ENCODE measurements at regions of chr13 and their contacts with region 1.

Region 1: DNA sequence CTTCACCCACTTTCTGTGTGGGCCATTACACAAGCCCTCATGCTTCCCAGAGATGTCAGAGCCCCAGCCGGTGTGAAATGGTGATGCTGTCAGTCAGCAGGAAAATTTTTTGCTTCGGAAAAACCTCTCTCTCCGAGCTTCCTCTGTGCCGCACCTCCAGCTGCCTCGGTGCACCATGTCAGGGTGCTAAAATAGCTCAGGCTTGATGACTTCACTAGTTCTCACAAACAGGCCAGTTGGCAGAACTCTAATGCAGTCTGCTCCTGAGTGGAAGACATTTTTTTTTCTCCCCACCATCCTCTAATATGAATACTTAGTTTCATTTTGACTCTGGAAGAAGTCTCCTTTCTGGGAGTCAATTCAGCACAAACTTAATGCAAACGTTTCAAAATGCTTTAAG is 71.3 kb downstream of the KLF12 start:
- DNase-seq: peak; percentile 75
- H3K4me3 Mint-ChIP-seq: peak overlapping the region; percentile 72
- H3K27ac Mint-ChIP-seq: peak overlapping the region; percentile 94
- H3K4me1 Mint-ChIP-seq: peaks cover 84% of the 10 kb centered on the region
- H3K27me3 Mint-ChIP-seq: no peaks in the 10 kb centered on the region

Region 2: DNA sequence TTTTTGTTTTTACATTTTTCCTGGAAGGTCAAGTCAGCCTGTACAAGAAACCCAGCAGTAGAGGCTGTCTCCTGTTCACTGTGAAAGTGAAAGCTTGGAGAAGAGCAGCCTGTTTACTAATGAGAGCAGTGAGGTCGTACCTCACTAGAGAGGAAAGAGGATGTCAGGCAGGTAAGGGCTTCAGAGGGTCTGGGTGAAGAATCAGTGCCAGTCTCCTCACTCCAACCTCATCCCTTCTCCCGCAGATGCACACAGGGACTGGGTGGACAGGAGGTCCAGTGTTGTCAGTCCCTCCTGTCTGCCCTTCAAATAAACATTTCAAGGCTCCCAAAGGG is 541.7 kb before region 1 on chr13:
- CTCF ChIA-PET with region 1: no interaction called
- POLR2A ChIA-PET with region 1: no interaction called
- intact Hi-C with region 1: no loop called
- DNase-seq: no peak
- H3K4me3 Mint-ChIP-seq: peak overlapping the region; percentile 60
- H3K27ac Mint-ChIP-seq: peak overlapping the region; percentile 61
- H3K4me1 Mint-ChIP-seq: peaks cover 16% of the 10 kb centered on the region
- H3K27me3 Mint-ChIP-seq: no peaks in the 10 kb centered on the region

Region 3: GRCh38 chr13:73715114-73715910 is 347.6 kb before region 1 on chr13:
- CTCF ChIA-PET with region 1: no interaction called
- POLR2A ChIA-PET with region 1: no interaction called
- intact Hi-C with region 1: loop called (anchors 5 kb)
- DNase-seq: peak; percentile 77
- H3K4me3 Mint-ChIP-seq: peak overlapping the region; percentile 33
- H3K27ac Mint-ChIP-seq: peak overlapping the region; percentile 75
- H3K4me1 Mint-ChIP-seq: peaks cover 54% of the 10 kb centered on the region
- H3K27me3 Mint-ChIP-seq: no peaks in the 10 kb centered on the region

Region 4: DNA sequence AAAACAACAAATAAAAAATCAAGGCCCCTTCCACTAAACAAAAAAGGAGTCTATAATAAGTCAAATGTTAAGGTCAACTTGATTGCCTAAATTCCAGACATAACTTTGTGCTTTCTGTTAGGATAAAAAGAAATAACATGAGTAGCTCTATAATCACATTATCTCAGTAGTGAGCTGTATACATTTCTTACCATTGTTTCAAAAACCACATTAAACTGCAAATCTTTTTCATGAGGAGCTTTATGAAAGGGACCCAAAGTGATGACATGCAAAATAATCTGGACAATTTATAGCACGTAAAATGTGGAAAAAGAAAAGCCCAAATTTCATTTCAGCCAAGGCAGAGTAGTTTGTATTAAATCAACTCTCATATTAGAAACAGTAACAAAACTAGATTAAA is 197.9 kb before region 1 on chr13:
- CTCF ChIA-PET with region 1: no interaction called
- POLR2A ChIA-PET with region 1: no interaction called
- intact Hi-C with region 1: loop called (anchors 5 kb)
- DNase-seq: no peak
- H3K4me3 Mint-ChIP-seq: no peak overlapping the region
- H3K27ac Mint-ChIP-seq: no peak overlapping the region
- H3K4me1 Mint-ChIP-seq: peaks cover 54% of the 10 kb centered on the region
- H3K27me3 Mint-ChIP-seq: no peaks in the 10 kb centered on the region

Region 5: GRCh38 chr13:73984949-73985691 is 77.8 kb before region 1 on chr13:
- CTCF ChIA-PET with region 1: no interaction called
- POLR2A ChIA-PET with region 1: interaction called, 4 read pairs
- intact Hi-C with region 1: loop called (anchors 1 kb)
- DNase-seq: peak; percentile 89
- H3K4me3 Mint-ChIP-seq: peak overlapping the region; percentile 63
- H3K27ac Mint-ChIP-seq: peak overlapping the region; percentile 90
- H3K4me1 Mint-ChIP-seq: peaks cover 46% of the 10 kb centered on the region
- H3K27me3 Mint-ChIP-seq: no peaks in the 10 kb centered on the region

Region 6: GRCh38 chr13:74005320-74006157 is 57.4 kb before region 1 on chr13:
- CTCF ChIA-PET with region 1: no interaction called
- POLR2A ChIA-PET with region 1: no interaction called
- intact Hi-C with region 1: no loop called
- DNase-seq: no peak
- H3K4me3 Mint-ChIP-seq: no peak overlapping the region
- H3K27ac Mint-ChIP-seq: no peak overlapping the region
- H3K4me1 Mint-ChIP-seq: peaks cover 44% of the 10 kb centered on the region
- H3K27me3 Mint-ChIP-seq: no peaks in the 10 kb centered on the region

Region 7: GRCh38 chr13:74077792-74078191 is 14.9 kb after region 1 on chr13:
- CTCF ChIA-PET with region 1: no interaction called
- POLR2A ChIA-PET with region 1: interaction called, 3 read pairs
- intact Hi-C with region 1: loop called (anchors 2 kb)
- DNase-seq: no peak
- H3K4me3 Mint-ChIP-seq: no peak overlapping the region
- H3K27ac Mint-ChIP-seq: peak overlapping the region; percentile 1
- H3K4me1 Mint-ChIP-seq: peaks cover 65% of the 10 kb centered on the region
- H3K27me3 Mint-ChIP-seq: no peaks in the 10 kb centered on the region

Region 8: DNA sequence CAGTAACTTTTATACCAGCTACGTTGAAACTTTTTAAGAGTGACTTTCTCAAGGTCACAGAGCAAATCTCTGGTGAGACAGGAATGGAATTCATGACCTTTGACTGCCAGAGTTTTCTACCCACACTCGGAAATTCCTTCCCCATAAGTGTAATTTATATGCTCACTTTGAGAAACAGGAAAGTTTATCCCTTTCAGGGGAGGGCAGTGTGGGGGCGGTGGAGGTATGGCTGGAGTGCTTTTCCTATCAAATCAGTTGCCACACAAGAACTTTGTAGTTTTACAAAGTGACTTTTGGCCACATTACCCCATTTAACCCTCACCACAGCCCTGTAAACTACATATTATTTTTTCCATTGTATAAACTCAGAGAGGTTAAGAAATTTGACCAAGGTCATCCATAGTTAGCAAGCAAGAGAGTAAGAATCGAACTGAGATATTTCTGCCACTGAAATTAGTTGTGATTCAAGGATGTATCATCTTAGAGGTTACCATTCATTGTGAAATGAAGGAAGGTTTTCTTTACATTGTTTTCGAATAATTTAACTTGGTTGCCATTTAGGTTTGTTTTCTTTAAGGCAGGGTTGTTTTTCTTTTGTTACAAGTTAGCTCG is 65.3 kb after region 1 on chr13:
- CTCF ChIA-PET with region 1: no interaction called
- POLR2A ChIA-PET with region 1: interaction called, 10 read pairs
- intact Hi-C with region 1: loop called (anchors 1 kb)
- DNase-seq: peak; percentile 56
- H3K4me3 Mint-ChIP-seq: peak overlapping the region; percentile 60
- H3K27ac Mint-ChIP-seq: peak overlapping the region; percentile 87
- H3K4me1 Mint-ChIP-seq: peaks cover 72% of the 10 kb centered on the region
- H3K27me3 Mint-ChIP-seq: no peaks in the 10 kb centered on the region

Region 9: DNA sequence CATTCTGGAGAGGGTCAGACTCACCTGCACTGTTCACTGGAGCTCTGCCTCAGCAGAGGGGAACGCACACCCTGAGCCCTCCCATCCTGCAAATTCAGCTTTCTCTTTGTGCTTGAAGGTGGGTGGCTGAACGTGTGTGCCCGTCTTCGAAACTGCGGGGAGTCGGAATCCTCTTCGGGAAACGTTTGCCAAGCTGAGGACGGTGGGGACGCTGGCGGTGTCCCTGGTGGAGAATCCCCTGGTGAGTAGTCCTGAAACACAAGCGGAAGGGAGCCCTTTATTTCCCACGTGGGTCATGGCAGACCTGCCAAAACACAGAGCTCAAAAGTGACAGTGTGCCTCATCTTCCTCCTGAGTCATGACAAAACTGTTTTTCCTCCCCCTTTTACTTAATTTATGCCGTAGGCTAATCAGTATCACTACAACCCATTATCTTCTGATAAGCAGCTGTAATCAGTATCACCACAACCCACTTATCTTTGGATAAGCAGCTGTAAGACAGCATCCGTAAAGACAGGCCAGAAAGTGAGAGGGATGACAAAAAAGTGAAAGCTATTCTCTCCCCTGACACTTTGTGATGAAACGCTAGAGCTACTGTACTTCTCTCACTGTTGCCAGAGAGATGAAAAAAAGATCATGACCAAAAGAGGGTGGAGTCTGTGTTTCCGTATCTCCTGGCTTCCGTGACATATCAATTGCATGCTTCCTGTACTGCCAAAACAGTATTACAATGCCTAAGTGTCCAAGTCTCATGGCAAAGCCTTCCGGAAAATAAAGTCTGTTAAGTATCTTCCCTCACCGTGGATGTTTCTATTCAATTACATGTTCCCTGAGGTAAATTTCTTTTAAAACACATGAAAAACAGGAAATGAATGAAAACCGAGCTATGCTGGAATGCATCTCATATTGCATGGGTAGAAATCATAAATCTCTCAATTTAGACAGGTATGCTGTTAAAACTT is 1263.5 kb after region 1 on chr13:
- CTCF ChIA-PET with region 1: no interaction called
- POLR2A ChIA-PET with region 1: no interaction called
- intact Hi-C with region 1: loop called (anchors 10 kb)
- DNase-seq: peak; percentile 78
- H3K4me3 Mint-ChIP-seq: peak overlapping the region; percentile 89
- H3K27ac Mint-ChIP-seq: peak overlapping the region; percentile 95
- H3K4me1 Mint-ChIP-seq: peaks cover 35% of the 10 kb centered on the region
- H3K27me3 Mint-ChIP-seq: no peaks in the 10 kb centered on the region